ENCODE measurements at regions of chr17 and their contacts with region 1.

Region 1: DNA sequence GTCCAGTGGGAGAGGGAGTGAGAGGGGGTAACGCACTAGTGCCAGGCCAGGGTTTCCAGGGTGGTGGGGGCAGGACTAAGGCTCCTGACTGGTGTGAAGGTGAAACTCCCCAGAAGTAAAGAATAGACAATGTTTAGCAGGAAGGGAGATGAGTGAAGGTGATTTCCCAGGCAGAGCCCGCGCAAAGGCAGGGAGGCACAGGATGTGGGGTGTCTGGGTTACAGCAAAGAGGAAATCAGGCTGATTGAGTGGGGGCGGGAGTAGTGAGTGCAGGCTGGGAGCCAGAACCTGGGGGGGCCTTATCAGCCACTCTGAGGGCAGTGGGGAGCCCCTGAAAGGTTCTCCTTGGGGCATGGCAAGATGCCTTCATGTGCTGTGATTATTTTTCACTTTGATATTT is 167.5 kb downstream of the UTP18 start:
- DNase-seq: peak; percentile 43 to 93 (median 70)
- ATAC-seq: peak; percentile 81
- H3K4me3 ChIP-seq: no peak overlapping the region
- H3K4me3 Mint-ChIP-seq: peak overlapping the region; percentile 49
- H3K27ac ChIP-seq: peak overlapping the region; percentile 92 to 96
- H3K27ac Mint-ChIP-seq: peak overlapping the region; percentile 95
- H3K4me1 ChIP-seq: peaks cover 49% of the 10 kb centered on the region
- H3K4me1 Mint-ChIP-seq: peaks cover 56% of the 10 kb centered on the region
- H3K27me3 ChIP-seq: no peaks in the 10 kb centered on the region
- H3K27me3 Mint-ChIP-seq: no peaks in the 10 kb centered on the region
- CTCF ChIP-seq: no peak

Region 2: GRCh38 chr17:51461578-51462004 is 33.7 kb after region 1 on chr17:
- CTCF ChIA-PET with region 1: interaction called, 9 read pairs
- POLR2A ChIA-PET with region 1: interaction called, 3 read pairs
- intact Hi-C with region 1: loop called in 1 of 2 experiments (anchors 5 kb)
- DNase-seq: peak; percentile 13 to 73 (median 42)
- ATAC-seq: peak; percentile 79
- H3K4me3 ChIP-seq: no peak overlapping the region
- H3K4me3 Mint-ChIP-seq: no peak overlapping the region
- H3K27ac ChIP-seq: no peak overlapping the region
- H3K27ac Mint-ChIP-seq: no peak overlapping the region
- H3K4me1 ChIP-seq: no peaks in the 10 kb centered on the region
- H3K4me1 Mint-ChIP-seq: no peaks in the 10 kb centered on the region
- H3K27me3 ChIP-seq: no peaks in the 10 kb centered on the region
- H3K27me3 Mint-ChIP-seq: no peaks in the 10 kb centered on the region
- CTCF ChIP-seq: peak; percentile 71